ENCODE measurements at regions of chr3 and their contacts with region 1.

Region 1: GRCh38 chr3:114056130-114057010 is at the starts of genes CCDC191 and QTRT2:
- H3K4me3 Mint-ChIP-seq: peak within 1 kb of the TSS; percentile 92
- H3K27ac Mint-ChIP-seq: peak within 1 kb of the TSS; percentile 97
- H3K4me1 Mint-ChIP-seq: peaks cover 41% of the 10 kb centered on the region
- H3K27me3 Mint-ChIP-seq: no peaks in the 10 kb centered on the region

Region 2: DNA sequence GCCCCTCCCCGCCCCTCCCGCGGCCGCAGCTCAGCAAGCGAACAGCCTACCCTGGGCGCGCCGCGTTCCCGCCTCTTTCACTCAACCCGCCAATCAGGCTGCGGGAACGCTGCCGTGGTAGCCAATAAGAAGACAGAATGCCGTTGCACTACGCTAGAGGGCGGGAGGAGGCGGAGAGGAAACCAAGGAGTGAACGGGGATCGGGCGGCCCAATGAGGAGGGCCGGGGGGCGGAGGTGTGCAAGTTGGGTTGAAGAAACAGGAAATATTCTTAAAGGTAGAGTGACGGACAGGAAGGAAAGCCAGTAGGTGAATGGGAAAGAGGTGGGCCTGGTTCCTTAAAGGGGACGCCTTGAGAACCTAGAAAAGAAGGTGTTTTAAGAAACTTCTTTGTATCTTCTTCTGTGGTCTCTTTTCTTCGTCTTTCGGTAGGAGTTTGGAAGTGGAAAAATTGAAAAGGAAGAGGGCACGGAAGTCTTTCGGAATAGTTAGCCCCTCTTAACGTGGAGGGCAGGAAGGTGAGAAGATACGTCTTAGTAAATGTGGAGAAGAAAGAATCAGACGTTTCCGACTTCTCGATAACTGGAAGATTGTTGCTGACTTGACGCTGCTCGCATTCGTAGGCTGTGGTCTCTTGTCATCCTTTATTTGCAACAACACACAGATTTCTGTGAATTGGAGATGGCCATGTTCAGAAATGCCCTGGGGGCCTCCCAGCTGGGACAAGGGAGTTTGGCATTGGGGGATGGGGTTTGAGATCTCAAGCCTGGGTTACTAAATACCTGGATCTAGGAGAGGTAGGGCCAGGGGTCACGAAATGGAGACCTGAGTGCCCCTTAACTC is 359.5 kb before region 1 on chr3:
- intact Hi-C with region 1: loop called (anchors 2 kb)
- H3K4me3 Mint-ChIP-seq: no peak overlapping the region
- H3K27ac Mint-ChIP-seq: no peak overlapping the region
- H3K4me1 Mint-ChIP-seq: peaks cover 33% of the 10 kb centered on the region
- H3K27me3 Mint-ChIP-seq: peaks cover 8% of the 10 kb centered on the region

Region 3: DNA sequence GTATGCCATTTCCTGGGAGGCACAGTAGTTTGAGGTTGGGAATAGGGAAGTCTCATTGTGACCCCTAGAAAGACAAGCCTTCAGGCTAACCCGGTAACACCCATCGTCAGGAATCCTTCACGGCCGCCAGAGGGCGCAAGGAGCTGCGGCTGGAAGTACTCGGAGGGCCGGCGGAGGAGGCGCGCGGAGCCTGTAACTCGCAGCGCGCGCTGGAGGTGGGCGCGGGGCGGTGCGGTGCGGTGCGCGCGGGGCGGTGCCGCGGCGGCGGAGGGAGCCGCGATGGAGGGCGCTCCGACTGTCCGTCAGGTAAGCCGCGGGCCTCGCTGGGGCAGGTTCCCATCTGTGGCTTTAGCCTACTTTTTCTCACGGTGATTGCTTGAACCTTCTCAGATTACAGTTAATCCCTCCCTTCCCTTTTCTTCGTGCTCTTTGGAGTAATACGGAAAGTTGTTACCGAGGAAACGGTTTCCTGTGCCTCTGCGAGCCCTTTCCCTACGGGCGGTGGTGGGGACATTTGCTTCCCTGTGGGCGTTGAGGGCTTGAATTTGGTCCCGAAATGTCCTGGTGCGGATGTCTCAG is 217.7 kb before region 1 on chr3 and contains the start of gene GRAMD1C:
- intact Hi-C with region 1: loop called (anchors 5 kb)
- H3K4me3 Mint-ChIP-seq: peak within 1 kb of the TSS; percentile 69
- H3K27ac Mint-ChIP-seq: no peak within 1 kb of the TSS
- H3K4me1 Mint-ChIP-seq: peaks cover 15% of the 10 kb centered on the region
- H3K27me3 Mint-ChIP-seq: peaks cover 5% of the 10 kb centered on the region

Region 4: GRCh38 chr3:113947372-113948014 is 108.9 kb before region 1 on chr3 and contains the start of gene ZDHHC23:
- intact Hi-C with region 1: loop called (anchors 2 kb)
- H3K4me3 Mint-ChIP-seq: peak within 1 kb of the TSS; percentile 84
- H3K27ac Mint-ChIP-seq: no peak within 1 kb of the TSS
- H3K4me1 Mint-ChIP-seq: no peaks in the 10 kb centered on the region
- H3K27me3 Mint-ChIP-seq: peaks cover 27% of the 10 kb centered on the region

Region 5: DNA sequence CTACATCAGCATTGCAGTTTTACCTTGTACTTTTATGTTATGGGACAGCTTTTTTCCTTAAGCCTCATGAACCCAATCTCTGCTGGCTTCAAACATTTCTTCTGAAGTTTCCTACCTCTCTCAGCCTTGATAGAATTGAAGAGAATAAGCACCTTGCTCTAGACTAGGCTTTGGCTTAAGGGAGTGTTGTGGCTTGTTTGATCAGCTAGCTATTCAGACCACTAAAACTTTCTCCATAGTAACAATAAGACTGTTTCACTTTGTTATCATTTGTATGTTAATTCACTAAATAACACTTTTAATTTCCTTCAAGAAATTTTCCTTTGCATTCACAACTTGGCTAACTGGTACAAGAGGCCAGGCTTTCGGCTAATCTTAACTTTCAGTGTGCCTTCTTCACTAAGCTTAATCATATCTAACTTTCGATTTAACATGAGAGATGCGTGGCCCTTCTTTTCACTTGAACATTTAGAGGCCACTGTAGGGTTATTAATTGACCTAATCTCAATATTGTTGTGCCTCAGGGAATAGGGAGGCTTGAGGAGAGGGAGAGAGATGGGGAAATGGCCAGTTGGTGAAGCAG is 229.4 kb after region 1 on chr3:
- intact Hi-C with region 1: no loop called
- H3K4me3 Mint-ChIP-seq: no peak overlapping the region
- H3K27ac Mint-ChIP-seq: no peak overlapping the region
- H3K4me1 Mint-ChIP-seq: peaks cover under 1% of the 10 kb centered on the region
- H3K27me3 Mint-ChIP-seq: no peaks in the 10 kb centered on the region

Region 6: DNA sequence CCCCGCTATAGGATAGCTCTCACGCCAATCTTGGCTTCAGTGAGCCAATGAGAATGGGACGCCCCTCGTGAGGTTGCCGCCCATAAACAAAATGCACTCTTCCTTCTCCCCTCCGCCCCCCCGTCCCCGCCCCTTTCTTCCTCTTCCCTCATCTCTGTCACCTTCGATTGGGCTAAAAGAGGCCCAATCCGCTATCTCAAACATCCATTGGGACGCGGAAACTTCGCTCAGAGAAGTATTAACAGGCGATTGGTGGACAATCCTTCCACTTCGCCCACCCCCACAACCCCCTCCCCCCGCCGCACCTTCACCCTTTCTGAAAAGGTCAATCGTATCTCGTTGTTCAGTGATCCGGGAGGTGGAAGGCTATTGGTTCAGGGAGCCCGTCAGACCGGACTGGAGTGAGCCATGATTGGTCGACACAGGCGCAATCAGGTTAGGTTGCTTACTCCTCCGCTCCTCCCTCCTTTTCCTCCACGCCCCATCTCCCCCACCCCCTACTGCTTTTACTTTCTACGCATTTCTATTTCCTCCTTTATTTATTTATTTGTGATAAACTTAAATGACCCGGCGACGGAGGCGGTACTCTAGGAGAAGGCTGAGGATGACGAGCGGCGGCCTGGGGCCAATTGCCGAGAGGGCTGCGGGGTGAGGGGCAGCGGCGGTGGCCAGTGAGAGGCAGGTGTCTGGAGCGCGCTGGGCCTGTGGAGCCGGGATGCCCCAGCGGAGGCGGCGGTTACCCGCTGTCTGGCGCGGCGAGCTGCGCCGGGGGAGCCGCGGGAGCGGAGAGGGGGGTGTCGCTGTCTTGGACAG is 1091.2 kb after region 1 on chr3:
- intact Hi-C with region 1: loop called (anchors 10 kb)
- H3K4me3 Mint-ChIP-seq: peak overlapping the region; percentile 97
- H3K27ac Mint-ChIP-seq: peak overlapping the region; percentile 97
- H3K4me1 Mint-ChIP-seq: peaks cover 5% of the 10 kb centered on the region
- H3K27me3 Mint-ChIP-seq: no peaks in the 10 kb centered on the region